Mammary epithelial cell (primary cell): ENCODE measurements at regions of chr3 and their contacts with region 1.

Region 1: DNA sequence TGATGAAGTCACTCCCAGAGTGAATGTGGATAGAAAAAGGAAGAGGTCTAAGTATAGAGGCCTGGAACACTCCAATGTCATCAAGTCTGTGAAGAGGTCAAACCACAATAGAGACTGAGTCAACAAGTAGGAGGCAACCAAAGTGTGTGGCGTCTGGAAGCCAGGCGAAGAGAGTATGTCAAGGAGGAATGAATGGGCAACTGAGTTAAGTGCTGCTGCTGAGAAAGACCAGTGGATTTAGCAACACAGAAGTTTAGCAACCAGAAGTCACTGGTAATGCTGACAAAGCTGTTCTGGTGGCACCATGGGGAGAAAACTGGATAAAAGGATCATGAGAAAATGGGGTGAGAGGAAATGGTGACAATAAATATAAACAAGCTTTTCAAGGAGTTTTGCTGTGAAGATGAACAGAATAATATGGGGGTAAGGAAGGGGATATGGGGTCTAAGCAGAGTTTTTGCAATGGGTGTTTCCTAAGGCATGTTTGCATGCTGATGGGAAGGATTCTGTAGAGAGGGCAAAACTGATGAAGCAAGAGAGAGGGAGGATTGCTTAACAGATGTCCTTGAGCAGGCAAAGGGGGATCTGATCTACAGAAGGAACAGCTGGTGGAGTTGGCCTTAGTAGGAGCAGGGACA is 38.4 kb downstream of the PCOLCE2 start:
- DNase-seq: peak; percentile 93
- H3K4me3 ChIP-seq: no peak overlapping the region
- H3K27ac ChIP-seq: no peak overlapping the region
- H3K4me1 ChIP-seq: peaks cover 31% of the 10 kb centered on the region
- H3K27me3 ChIP-seq: no peaks in the 10 kb centered on the region
- CTCF ChIP-seq: no peak

Region 2: GRCh38 chr3:142705198-142705597 is 145.3 kb before region 1 on chr3:
- CTCF ChIA-PET with region 1: no interaction called
- dilution Hi-C with region 1: no loop called
- in situ Hi-C with region 1: no loop called
- intact Hi-C with region 1: no loop called
- DNase-seq: no peak
- H3K4me3 ChIP-seq: no peak overlapping the region
- H3K27ac ChIP-seq: no peak overlapping the region
- H3K4me1 ChIP-seq: no peaks in the 10 kb centered on the region
- H3K27me3 ChIP-seq: no peaks in the 10 kb centered on the region
- CTCF ChIP-seq: no peak

Region 3: GRCh38 chr3:142817897-142818296 is 32.6 kb before region 1 on chr3:
- CTCF ChIA-PET with region 1: no interaction called
- dilution Hi-C with region 1: loop called (anchors 5 kb)
- in situ Hi-C with region 1: no loop called
- intact Hi-C with region 1: no loop called
- DNase-seq: no peak
- H3K4me3 ChIP-seq: no peak overlapping the region
- H3K27ac ChIP-seq: no peak overlapping the region
- H3K4me1 ChIP-seq: no peaks in the 10 kb centered on the region
- H3K27me3 ChIP-seq: no peaks in the 10 kb centered on the region
- CTCF ChIP-seq: no peak

Region 4: DNA sequence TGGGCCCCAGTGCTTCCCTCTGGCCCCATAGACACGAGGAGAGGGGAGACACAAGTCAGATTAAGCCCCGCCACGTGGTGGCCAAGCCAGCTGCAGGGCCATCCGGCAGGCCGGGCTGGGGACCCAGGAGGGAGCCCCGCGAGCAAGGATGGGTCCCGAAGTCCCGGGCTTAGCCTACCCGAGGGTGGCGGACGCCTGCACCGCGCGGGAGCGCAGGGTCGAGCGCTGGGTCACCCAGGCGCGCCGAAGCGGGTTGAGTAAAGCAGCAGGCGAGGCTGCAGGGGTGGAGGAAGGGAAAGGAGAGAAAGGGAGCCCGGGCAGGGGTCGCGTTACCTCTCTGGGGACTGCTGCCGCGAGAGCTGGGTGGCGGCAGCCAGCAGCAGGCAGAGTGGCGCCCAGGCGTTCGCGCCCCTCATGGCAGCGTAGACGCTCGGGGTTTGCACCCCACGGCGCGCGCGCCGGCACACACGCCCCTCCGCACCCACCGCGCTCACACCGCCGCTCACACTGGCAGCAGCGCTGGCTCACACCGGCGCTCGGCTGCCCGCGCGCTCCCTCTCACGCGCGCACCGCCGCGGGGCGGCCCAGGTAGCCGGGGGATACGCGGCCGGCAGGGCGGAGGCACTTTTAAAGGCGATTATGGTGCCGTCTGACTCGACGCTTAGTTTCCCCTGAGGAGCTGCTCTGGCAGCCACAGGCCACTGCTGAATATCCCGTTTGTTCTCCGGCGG is 38.1 kb after region 1 on chr3 and contains the start of gene PCOLCE2:
- CTCF ChIA-PET with region 1: no interaction called
- dilution Hi-C with region 1: no loop called
- in situ Hi-C with region 1: no loop called
- intact Hi-C with region 1: loop called (anchors 5 kb)
- DNase-seq: peak; percentile 47
- H3K4me3 ChIP-seq: peak within 1 kb of the TSS; percentile 60 to 61 (median 60)
- H3K27ac ChIP-seq: no peak within 1 kb of the TSS
- H3K4me1 ChIP-seq: peaks cover 13% of the 10 kb centered on the region
- H3K27me3 ChIP-seq: no peaks in the 10 kb centered on the region
- CTCF ChIP-seq: no peak
- total RNA-seq, gene PCOLCE2: 2.8 to 3.5 TPM

Region 5: GRCh38 chr3:142896201-142896755 is 45.8 kb after region 1 on chr3:
- CTCF ChIA-PET with region 1: no interaction called
- dilution Hi-C with region 1: loop called (anchors 5 kb)
- in situ Hi-C with region 1: no loop called
- intact Hi-C with region 1: no loop called
- DNase-seq: peak; percentile 78
- H3K4me3 ChIP-seq: no peak overlapping the region
- H3K27ac ChIP-seq: no peak overlapping the region
- H3K4me1 ChIP-seq: peaks cover 3% of the 10 kb centered on the region
- H3K27me3 ChIP-seq: no peaks in the 10 kb centered on the region
- CTCF ChIP-seq: no peak